ENCODE measurements at regions of chr2 and their contacts with region 1.

Region 1: DNA sequence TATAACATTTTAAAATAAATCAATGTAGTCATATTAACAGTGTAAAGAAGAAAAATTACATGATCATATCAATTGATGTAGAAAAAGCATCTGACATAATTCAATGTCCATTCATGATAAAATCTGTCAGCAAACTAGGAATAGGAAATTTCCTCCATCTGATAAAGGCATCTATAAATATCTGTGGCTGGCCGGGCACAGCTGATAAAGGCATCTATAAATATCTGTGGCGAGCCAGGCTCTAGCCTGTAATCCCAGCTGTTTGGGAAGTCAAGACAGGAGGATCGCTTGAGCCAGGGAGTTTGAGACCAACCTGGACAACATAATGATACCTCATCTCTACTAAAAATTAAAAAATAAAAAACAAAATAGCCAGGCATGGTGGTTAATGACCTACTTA is 18.1 kb upstream of the RANBP2 start:
- DNase-seq: no peak
- H3K4me3 ChIP-seq: no peak overlapping the region
- H3K27ac ChIP-seq: no peak overlapping the region
- H3K4me1 ChIP-seq: no peaks in the 10 kb centered on the region
- H3K27me3 ChIP-seq: no peaks in the 10 kb centered on the region
- CTCF ChIP-seq: no peak

Region 2: DNA sequence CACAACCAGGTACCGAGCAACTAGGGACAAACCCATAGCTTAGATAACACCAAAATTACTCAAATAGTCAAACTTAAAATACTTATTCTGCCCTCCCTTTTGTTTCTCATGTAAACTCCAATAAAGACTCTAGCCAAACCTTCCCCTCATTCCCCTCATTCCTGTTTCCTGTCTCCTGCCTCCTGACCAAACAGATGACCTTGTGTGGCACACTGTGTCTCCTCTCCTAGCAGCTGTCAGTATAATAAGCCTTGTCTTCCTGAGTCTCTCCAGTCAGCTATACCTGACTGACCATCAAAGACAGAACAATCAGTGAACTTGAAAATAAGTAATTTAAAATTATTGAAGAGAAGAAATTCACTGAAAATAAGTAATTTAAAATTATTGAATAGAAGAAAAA is 309.2 kb before region 1 on chr2:
- CTCF ChIA-PET with region 1: no interaction called
- POLR2A ChIA-PET with region 1: interaction called, 10 read pairs
- intact Hi-C with region 1: no loop called
- DNase-seq: no peak
- H3K4me3 ChIP-seq: no peak overlapping the region
- H3K27ac ChIP-seq: no peak overlapping the region
- H3K4me1 ChIP-seq: no peaks in the 10 kb centered on the region
- H3K27me3 ChIP-seq: no peaks in the 10 kb centered on the region
- CTCF ChIP-seq: no peak

Region 3: GRCh38 chr2:108533832-108534583 is 167.2 kb before region 1 on chr2 and contains the start of gene LIMS1:
- CTCF ChIA-PET with region 1: no interaction called
- POLR2A ChIA-PET with region 1: no interaction called
- intact Hi-C with region 1: no loop called
- DNase-seq: peak; percentile 90 to 93
- H3K4me3 ChIP-seq: peak within 1 kb of the TSS; percentile 73
- H3K27ac ChIP-seq: peak within 1 kb of the TSS; percentile 83
- H3K4me1 ChIP-seq: peaks cover 15% of the 10 kb centered on the region
- H3K27me3 ChIP-seq: no peaks in the 10 kb centered on the region
- CTCF ChIP-seq: no peak
- total RNA-seq, gene LIMS1: 58.2 and 61.6 TPM in 2 replicates